H1 (cell line): ENCODE measurements at regions of chr21 and their contacts with region 1.

Region 1: GRCh38 chr21:23127973-23128372 is 2129.8 kb downstream of the NCAM2 start:
- DNase-seq: no peak
- H3K4me3 ChIP-seq: no peak overlapping the region
- H3K27ac ChIP-seq: no peak overlapping the region
- H3K4me1 ChIP-seq: no peaks in the 10 kb centered on the region
- H3K27me3 ChIP-seq: no peaks in the 10 kb centered on the region
- CTCF ChIP-seq: peak; percentile 51 to 86 (median 60)
- EP300 ChIP-seq: no peak
- POLR2A ChIP-seq: no peak
- RAD21 ChIP-seq: peak; percentile 86 to 90

Region 2: GRCh38 chr21:22880573-22880972 is 247.4 kb before region 1 on chr21:
- CTCF ChIA-PET with region 1: no interaction called
- POLR2A ChIA-PET with region 1: no interaction called
- DNase-seq: no peak
- H3K4me3 ChIP-seq: no peak overlapping the region
- H3K27ac ChIP-seq: no peak overlapping the region
- H3K4me1 ChIP-seq: peaks cover 0 to 5% (median 2%) of the 10 kb centered on the region in 4 experiments; a peak in 2 of 7 replicates
- H3K27me3 ChIP-seq: no peaks in the 10 kb centered on the region
- CTCF ChIP-seq: no peak
- EP300 ChIP-seq: no peak
- POLR2A ChIP-seq: no peak
- RAD21 ChIP-seq: no peak

Region 3: GRCh38 chr21:23394458-23394857 is 266.5 kb after region 1 on chr21:
- CTCF ChIA-PET with region 1: interaction called, 11 read pairs
- POLR2A ChIA-PET with region 1: no interaction called
- DNase-seq: no peak
- H3K4me3 ChIP-seq: no peak overlapping the region
- H3K27ac ChIP-seq: no peak overlapping the region
- H3K4me1 ChIP-seq: peaks cover 0 to 7% (median under 1%) of the 10 kb centered on the region in 4 experiments; a peak in 2 of 7 replicates
- H3K27me3 ChIP-seq: no peaks in the 10 kb centered on the region
- CTCF ChIP-seq: no peak
- EP300 ChIP-seq: no peak
- POLR2A ChIP-seq: no peak
- RAD21 ChIP-seq: no peak; a peak in 1 of 4 replicates

Region 4: DNA sequence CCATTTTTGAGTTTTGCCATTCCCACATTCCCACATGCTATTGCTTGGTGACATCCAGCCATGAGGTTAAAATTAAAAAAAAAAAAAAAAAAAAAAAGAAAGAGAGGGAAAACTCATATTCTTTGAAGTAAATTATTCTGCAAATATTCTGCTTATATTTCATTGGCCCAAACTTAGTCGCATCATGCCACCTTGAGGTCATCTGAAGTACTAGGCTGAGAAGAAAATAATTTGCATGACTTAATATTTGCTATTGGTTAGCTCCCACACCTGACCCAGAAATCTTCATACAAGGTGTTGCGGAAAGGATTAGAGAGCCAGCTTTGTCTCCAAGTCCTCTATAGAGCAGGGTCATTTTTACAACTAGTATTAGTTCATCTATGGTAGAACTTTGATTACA is 273.3 kb after region 1 on chr21:
- CTCF ChIA-PET with region 1: interaction called, 11 read pairs
- POLR2A ChIA-PET with region 1: no interaction called
- DNase-seq: no peak
- H3K4me3 ChIP-seq: no peak overlapping the region
- H3K27ac ChIP-seq: no peak overlapping the region
- H3K4me1 ChIP-seq: no peaks in the 10 kb centered on the region
- H3K27me3 ChIP-seq: no peaks in the 10 kb centered on the region
- CTCF ChIP-seq: peak in 2 of 3 experiments; percentile 30 to 48; a peak in 2 of 4 replicates
- EP300 ChIP-seq: no peak
- POLR2A ChIP-seq: no peak
- RAD21 ChIP-seq: peak; percentile 71 to 72